ENCODE measurements at regions of chr21 and their contacts with region 1.

Region 1: DNA sequence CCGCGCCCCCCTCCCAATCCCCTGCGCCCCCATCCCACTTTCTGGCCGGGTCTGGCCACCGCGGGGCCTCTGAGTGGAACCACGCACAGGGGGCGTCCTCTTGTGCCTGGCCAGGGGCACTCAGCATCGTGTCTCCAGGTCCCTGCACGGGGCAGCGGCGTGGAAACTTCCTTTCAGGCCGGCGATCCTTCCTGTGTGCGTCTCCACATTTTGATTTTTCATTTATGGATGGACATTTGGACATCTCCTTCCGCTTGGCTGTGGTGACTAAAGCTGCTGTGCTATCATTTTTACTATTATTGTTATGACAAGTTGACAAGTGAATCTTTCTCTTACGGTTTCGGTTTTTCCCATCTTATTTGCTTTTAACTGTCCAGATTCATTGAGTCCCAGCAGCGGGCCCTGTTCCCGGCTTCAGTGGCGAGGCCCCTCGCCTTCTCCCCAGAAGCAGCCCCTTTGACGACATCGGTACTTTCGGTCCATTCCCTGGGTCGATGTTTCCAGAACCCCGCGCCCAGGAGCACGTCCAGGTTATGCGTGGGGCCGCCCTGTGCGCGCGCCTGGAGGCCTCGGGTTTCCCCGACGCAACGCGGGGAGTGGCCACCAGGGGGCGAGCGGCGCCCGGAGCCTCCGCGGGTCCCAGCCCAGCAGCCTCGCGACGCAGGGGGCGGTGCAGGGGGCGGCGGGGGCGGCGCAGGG is 12.4 kb upstream of the SLC19A1 start:
- DNase-seq: peak; percentile 87
- H3K4me3 Mint-ChIP-seq: peak overlapping the region; percentile 88
- H3K27ac Mint-ChIP-seq: peak overlapping the region; percentile 79
- H3K4me1 Mint-ChIP-seq: peaks cover 30% of the 10 kb centered on the region
- H3K27me3 Mint-ChIP-seq: peaks cover 5% of the 10 kb centered on the region

Region 2: DNA sequence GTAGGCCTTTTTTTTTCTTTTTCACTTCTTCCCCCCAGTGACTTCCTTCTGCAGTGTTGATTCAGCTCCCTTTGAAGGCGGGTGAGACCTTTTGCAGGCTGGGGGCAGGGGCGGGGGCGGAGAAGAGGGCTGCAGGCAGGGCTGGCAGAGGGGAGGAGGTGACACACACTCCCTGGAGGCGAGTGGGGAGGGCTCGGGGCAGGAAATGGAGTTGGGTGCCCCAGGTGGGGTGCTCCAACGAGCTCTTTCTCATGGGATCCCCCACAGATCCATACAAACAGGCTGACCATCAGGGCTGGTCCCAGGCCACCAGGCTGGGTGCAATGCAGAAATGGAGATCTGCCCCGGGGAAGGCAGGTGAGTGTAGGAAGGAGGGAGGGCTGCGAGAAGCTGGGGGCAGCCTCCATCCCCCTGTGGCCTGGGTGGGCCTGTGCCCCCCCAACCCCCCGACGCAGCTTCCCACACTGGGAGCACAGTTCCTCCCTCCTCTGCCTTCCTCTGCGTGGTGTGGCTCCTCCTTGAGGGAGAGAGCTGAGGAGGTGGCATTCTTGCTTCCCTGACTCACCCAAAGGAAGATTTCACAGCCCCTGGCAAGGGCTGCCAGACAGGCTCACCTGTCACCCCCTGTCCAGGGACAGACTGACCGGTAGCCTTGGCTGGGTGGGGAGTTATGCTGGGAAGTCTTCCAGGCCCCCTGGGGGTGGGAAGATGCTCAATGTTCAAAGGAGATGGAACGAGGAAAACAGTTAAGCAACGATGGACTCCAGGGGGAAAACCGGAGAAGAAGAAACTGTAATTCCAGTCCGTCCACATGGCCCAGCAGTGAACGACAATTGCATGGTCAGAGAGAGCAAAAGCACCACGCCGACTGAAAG is 626.8 kb before region 1 on chr21:
- CTCF ChIA-PET with region 1: no interaction called
- POLR2A ChIA-PET with region 1: no interaction called
- intact Hi-C with region 1: loop called (anchors 2 kb)
- DNase-seq: peak; percentile 96
- H3K4me3 Mint-ChIP-seq: peak overlapping the region; percentile 85
- H3K27ac Mint-ChIP-seq: peak overlapping the region; percentile 96
- H3K4me1 Mint-ChIP-seq: peaks cover 74% of the 10 kb centered on the region
- H3K27me3 Mint-ChIP-seq: no peaks in the 10 kb centered on the region

Region 3: DNA sequence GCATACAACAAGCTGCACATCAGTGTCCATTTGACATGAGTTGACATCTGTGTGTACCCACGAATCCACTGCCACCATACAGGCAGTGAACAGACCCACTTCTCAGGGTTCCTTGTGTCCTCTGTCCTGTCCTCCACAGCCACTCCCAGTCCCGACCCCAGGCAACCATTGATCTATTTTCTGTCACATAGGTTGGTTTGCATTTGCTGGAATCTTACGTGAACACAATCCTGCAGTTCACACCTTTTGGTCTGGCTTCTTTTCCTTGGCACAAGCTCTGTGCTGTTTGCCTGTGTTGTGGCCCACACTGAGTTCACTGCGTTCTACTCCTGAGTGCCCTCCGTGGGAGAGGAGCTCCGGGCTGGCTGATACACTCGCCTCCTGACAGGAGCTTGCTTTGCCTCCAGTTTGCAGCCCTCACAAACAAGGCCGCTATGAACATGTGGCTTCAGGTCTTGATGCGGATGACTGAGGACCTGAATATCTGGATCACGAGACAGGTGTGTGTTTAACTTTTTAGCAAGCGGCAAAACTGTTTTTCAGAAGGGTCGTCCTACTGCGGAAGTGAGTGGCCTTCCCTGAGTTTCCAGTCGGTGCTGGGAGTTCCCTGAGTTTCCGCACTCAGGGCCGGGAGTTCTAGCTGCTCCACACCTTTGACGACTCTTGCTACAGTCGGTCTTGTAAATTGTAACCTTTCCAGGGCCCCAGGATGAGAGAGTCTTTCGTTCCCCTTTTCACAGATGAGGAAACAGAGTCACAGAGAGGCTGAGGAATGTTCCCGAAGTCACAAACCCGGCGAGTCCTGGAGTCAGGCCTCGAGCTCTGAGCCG is 162.7 kb before region 1 on chr21:
- CTCF ChIA-PET with region 1: no interaction called
- POLR2A ChIA-PET with region 1: no interaction called
- intact Hi-C with region 1: no loop called
- DNase-seq: no peak
- H3K4me3 Mint-ChIP-seq: no peak overlapping the region
- H3K27ac Mint-ChIP-seq: no peak overlapping the region
- H3K4me1 Mint-ChIP-seq: no peaks in the 10 kb centered on the region
- H3K27me3 Mint-ChIP-seq: peaks cover 17% of the 10 kb centered on the region

Region 4: GRCh38 chr21:45517249-45518065 is 37.2 kb before region 1 on chr21:
- CTCF ChIA-PET with region 1: no interaction called
- POLR2A ChIA-PET with region 1: no interaction called
- intact Hi-C with region 1: loop called (anchors 2 kb)
- DNase-seq: peak; percentile 57
- H3K4me3 Mint-ChIP-seq: peak overlapping the region; percentile 35
- H3K27ac Mint-ChIP-seq: peak overlapping the region; percentile 80
- H3K4me1 Mint-ChIP-seq: peaks cover 14% of the 10 kb centered on the region
- H3K27me3 Mint-ChIP-seq: no peaks in the 10 kb centered on the region

Region 5: DNA sequence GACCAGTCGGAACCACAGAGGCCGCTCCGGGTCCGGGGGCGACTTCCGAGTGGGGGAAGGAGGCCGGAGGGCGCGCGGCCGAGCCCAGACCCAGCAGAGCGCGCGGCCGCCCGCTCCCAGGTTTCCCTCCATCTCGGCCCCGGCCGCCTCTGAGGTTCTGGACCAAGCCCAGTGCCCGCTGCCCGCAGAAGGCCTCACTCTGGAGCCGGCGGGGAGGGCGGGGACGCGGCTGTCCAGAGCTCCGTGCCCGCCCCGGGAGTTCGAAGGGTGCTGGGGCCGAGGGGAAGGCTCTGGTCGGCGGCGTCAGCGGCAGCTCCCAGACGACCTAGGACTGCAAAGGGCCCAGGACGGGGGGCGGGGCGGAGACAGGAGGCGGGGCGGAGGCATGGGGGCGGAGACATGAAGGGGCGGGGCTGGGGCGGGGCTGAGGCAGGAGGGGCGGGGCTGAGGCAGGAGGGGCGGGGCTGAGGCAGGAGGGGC is 35.7 kb after region 1 on chr21:
- CTCF ChIA-PET with region 1: interaction called, 8 read pairs
- POLR2A ChIA-PET with region 1: interaction called, 12 read pairs
- intact Hi-C with region 1: loop called (anchors 1 kb)
- DNase-seq: peak; percentile 84
- H3K4me3 Mint-ChIP-seq: peak overlapping the region; percentile 52
- H3K27ac Mint-ChIP-seq: no peak overlapping the region
- H3K4me1 Mint-ChIP-seq: peaks cover 16% of the 10 kb centered on the region
- H3K27me3 Mint-ChIP-seq: peaks cover 17% of the 10 kb centered on the region

Region 6: DNA sequence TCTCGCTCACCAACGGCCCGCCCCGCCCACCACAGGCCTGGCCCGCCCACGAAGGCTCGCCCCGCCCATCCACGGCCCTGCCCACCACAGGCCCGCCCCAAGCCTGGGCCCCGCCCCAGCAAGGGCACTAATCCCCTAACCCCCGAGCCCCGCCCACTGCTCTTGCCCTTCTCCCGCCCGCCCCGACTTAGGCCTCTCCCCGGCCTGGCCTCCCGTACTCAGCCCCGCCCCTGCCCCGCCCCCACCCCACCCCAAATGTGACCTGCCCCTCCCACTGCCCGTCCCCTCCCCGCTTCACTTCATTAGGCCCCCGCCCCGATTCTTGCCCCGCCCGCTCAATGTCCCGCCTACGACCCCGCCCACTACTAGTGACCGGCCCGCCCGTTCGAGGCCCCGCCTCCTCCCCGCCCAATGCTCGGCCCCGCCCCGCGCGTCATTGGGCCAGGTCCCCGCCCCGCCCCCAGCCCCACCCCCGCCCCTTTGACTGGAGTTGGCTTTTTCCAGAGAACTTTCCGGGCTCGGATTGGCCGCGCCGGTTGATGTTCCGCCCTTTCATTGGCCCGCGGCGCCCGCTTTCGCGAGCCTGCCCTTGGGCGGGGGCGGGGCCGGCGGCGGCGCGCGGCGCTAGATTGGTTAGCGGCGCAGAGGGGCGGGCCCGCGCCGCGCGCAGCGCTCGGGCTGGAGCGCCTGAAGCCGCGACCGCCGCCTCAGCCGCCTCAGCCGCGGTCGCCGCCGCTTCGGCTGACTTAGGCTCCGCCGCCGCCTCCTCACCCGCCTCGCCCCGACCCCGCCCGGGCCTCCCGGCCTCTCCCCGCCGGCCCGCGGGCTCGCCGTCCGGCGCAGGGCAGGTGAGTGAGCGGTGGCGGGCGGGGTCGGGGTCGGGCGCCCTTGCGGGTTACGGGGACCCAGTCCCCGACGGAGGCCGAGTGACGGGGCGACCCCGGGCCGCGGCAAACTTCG is 88.7 kb after region 1 on chr21 and contains the start of gene PCBP3:
- CTCF ChIA-PET with region 1: no interaction called
- POLR2A ChIA-PET with region 1: no interaction called
- intact Hi-C with region 1: loop called (anchors 1 kb)
- DNase-seq: peak; percentile 98
- H3K4me3 Mint-ChIP-seq: peak within 1 kb of the TSS; percentile 71
- H3K27ac Mint-ChIP-seq: peak within 1 kb of the TSS; percentile 49
- H3K4me1 Mint-ChIP-seq: peaks cover 25% of the 10 kb centered on the region
- H3K27me3 Mint-ChIP-seq: peaks cover 18% of the 10 kb centered on the region
- total RNA-seq, gene PCBP3: 5.3 to 6.6 TPM

Measured in activated CD4-positive, alpha-beta memory T cell treated with anti-CD3 and anti-CD28 coated beads for 36 hours (primary cell).